Activated naive CD4-positive, alpha-beta T cell treated with anti-CD3 and anti-CD28 coated beads for 36 hours (primary cell): ENCODE measurements at regions of chr10 and their contacts with region 1.

Region 1: DNA sequence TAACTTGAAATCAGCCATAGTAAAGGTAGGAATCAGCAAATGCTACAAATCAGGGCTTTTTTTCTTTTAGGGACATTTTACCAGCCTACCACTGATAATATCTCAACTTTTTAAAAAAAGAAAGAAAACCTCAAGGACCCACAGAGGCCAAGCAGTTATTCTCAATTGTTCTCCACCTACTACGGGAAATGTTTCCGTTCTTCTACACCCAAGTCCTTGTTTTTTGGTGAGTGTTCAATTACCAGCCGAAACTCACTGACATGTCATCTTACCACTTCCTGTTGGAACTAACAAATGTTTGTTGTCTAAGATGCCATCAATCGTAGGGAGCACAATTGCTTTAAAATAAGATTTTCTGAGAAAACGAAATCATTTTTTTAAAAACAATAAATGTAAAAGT is 50.2 kb upstream of the CDK1 start:
- DNase-seq: no peak
- H3K4me3 Mint-ChIP-seq: peak overlapping the region; percentile 71
- H3K27ac Mint-ChIP-seq: peak overlapping the region; percentile 91
- H3K4me1 Mint-ChIP-seq: peaks cover 60% of the 10 kb centered on the region
- H3K27me3 Mint-ChIP-seq: peaks cover 2% of the 10 kb centered on the region

Region 2: DNA sequence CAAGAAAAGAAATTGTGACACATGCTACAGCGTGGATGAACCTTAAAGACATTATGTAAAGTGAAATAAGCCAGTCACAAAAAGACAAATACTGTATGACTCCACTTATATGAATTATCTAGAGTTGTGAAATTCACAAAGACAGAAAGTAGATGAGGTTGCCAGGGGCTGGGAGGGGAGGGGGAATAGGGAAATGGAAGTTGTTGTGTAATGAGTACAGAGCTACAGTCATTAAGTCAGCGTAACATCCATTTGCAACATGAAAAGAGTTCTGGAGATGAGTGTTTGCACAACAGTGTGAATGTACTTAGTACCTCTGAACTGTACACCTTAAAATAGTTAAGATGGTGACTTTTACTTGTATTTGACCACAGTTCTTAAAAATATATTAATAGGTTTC is 61.8 kb before region 1 on chr10:
- CTCF ChIA-PET with region 1: no interaction called
- intact Hi-C with region 1: loop called (anchors 1 kb)
- DNase-seq: peak; percentile 51
- H3K4me3 Mint-ChIP-seq: no peak overlapping the region
- H3K27ac Mint-ChIP-seq: no peak overlapping the region
- H3K4me1 Mint-ChIP-seq: peaks cover 20% of the 10 kb centered on the region
- H3K27me3 Mint-ChIP-seq: no peaks in the 10 kb centered on the region

Region 3: DNA sequence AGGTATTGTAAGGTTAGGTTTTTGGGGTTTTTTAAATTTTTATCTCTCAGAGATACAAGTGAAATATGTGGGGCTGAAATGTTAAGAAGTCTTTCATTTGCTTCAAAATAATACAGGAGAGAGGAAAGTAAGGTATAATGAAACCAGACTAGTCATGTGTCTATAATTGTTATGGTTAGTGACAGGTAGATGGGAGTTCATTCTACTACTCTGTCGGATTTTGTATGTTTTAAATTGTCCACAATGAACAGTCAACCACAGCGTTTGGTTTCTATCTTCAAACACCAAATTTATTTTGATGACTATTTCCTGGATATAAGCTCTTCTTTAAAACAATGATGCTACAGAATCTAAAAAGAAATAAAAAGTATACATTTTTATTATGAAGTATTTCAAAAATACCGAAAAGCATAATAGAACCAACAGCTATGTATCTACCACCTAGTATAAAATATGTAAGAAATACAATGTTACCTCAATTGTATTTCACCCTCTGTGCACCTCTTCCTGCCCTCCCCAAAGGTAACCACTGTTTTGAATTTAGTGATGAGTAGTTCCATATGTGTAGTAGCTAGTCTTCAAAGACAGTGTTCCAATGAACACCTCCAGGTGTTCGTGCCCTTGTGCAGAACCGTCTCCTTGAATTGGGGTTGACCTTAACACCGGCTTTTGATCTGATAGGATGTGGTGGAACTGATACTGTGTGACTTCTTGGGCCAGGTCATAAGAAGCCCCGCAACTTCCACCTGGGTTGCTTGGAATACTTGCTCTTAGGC is 24.6 kb before region 1 on chr10:
- CTCF ChIA-PET with region 1: no interaction called
- intact Hi-C with region 1: loop called (anchors 1 kb)
- DNase-seq: no peak
- H3K4me3 Mint-ChIP-seq: no peak overlapping the region
- H3K27ac Mint-ChIP-seq: peak overlapping the region; percentile 2
- H3K4me1 Mint-ChIP-seq: peaks cover 45% of the 10 kb centered on the region
- H3K27me3 Mint-ChIP-seq: no peaks in the 10 kb centered on the region

Region 4: DNA sequence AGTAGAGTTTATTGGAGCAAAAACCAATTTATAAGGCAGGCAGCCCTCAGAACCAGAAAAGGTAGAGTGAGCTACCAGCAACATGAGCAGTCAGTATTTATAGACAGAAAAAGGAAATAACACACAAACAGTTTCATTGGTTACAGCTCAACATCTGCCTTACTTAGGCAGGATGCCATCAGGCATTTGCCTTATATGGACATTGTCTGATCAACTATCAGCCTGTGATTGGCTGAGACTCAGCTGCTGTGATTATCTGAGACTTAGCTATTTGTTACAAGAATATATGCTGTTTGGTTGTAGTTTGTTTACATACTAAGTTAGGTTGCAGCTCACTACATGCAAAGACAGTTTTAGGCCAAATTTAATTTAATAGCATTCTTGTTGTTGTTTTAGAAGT is 10.2 kb before region 1 on chr10:
- CTCF ChIA-PET with region 1: interaction called, 7 read pairs
- intact Hi-C with region 1: loop called (anchors 1 kb)
- DNase-seq: no peak
- H3K4me3 Mint-ChIP-seq: no peak overlapping the region
- H3K27ac Mint-ChIP-seq: no peak overlapping the region
- H3K4me1 Mint-ChIP-seq: peaks cover 29% of the 10 kb centered on the region
- H3K27me3 Mint-ChIP-seq: no peaks in the 10 kb centered on the region